CD14-positive monocyte (primary cell): ENCODE measurements at regions of chr17 and their contacts with region 1.

Region 1: DNA sequence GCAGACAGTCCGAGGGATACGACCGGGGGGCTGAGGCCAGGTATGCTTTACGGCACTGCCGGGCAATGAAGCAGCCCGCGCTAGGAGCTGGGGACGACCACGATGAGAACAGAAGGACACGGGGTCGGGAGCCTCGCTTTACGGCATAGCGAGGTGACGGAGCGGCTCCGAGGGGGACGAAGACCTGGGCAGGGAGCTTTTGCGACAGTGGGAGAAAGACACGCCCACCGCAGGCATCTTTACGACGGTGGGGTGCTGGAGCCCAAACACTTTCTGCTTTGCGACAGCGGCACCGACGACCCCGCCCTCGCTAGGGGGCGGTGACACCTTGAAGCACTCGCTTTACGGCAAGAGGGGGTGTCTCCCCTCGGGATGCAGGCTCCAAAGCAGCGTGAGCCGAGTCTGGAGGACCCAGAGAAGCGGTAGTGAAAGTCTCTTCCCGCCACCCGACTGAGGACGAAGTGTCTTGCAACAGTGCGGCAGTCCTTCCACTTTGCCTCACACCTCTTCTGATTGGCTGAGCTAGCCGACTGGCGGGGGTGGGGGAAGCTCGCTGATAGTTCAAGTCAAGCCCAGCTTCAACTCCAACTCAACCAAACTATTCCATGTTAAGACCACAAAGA is 350 bp upstream of the NEURL4 start:
- DNase-seq: peak; percentile 92 to 100 (median 99)
- H3K4me3 ChIP-seq: peak overlapping the region; percentile 80 to 91 (median 81)
- H3K4me3 Mint-ChIP-seq: peak overlapping the region; percentile 91 to 98
- H3K27ac ChIP-seq: peak overlapping the region; percentile 92
- H3K27ac Mint-ChIP-seq: peak overlapping the region; percentile 96 to 100 (median 98)
- H3K4me1 ChIP-seq: peaks cover 34 to 39% of the 10 kb centered on the region in 2 donors
- H3K4me1 Mint-ChIP-seq: peaks cover 36% of the 10 kb centered on the region
- H3K27me3 ChIP-seq: no peaks in the 10 kb centered on the region
- H3K27me3 Mint-ChIP-seq: peaks cover 0 to 6% (median 0%) of the 10 kb centered on the region in 3 donors
- CTCF ChIP-seq: no peak

Region 2: GRCh38 chr17:7396147-7396546 is 66.7 kb after region 1 on chr17:
- intact Hi-C with region 1: no loop called
- DNase-seq: no peak
- H3K4me3 ChIP-seq: no peak overlapping the region
- H3K4me3 Mint-ChIP-seq: peak overlapping the region in 1 of 2 donors; percentile 8
- H3K27ac ChIP-seq: no peak overlapping the region
- H3K27ac Mint-ChIP-seq: peak overlapping the region in 1 of 7 donors; percentile 19
- H3K4me1 ChIP-seq: peaks cover 15 to 19% of the 10 kb centered on the region in 2 donors
- H3K4me1 Mint-ChIP-seq: peaks cover 15% of the 10 kb centered on the region
- H3K27me3 ChIP-seq: no peaks in the 10 kb centered on the region
- H3K27me3 Mint-ChIP-seq: peaks cover 0 to 6% (median 3%) of the 10 kb centered on the region in 3 donors
- CTCF ChIP-seq: no peak

Region 3: GRCh38 chr17:7572588-7573323 is 243.3 kb after region 1 on chr17:
- intact Hi-C with region 1: loop called in 1 of 2 experiments (anchors 10 kb)
- DNase-seq: peak; percentile 99 to 100 (median 100)
- H3K4me3 ChIP-seq: peak overlapping the region; percentile 60 to 100 (median 95)
- H3K4me3 Mint-ChIP-seq: peak overlapping the region; percentile 97 to 98
- H3K27ac ChIP-seq: peak overlapping the region; percentile 99
- H3K27ac Mint-ChIP-seq: peak overlapping the region; percentile 98 to 100 (median 99)
- H3K4me1 ChIP-seq: peaks cover 48 to 52% of the 10 kb centered on the region in 2 donors
- H3K4me1 Mint-ChIP-seq: peaks cover 54% of the 10 kb centered on the region
- H3K27me3 ChIP-seq: no peaks in the 10 kb centered on the region
- H3K27me3 Mint-ChIP-seq: peaks cover 0 to 9% (median 2%) of the 10 kb centered on the region in 3 donors
- CTCF ChIP-seq: no peak